ENCODE measurements at regions of chr14 and their contacts with region 1.

Region 1: DNA sequence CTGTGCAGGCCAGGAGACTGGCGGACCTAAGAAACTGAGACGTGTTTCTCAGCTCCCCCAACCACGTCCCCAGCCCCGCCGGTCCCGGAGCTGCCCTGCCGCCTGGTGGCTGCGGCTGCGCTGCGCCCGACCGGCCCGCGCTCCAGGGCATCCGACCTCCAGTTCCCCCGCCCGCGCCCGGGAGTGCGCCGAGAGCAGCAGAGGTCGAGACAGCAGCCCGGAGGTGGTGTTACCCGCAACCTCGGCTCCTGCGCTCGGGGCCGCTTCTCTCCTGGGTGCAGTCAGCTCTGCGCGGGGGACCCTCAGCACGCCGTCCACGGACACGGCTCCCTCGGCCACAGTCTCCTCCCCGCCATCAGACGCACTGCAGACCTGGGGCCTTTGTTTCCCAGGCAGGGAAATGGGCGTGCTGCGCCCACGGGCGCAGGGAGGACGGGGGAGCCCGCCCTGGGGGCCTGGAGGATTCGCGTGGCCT is 21.6 kb upstream of the GPR132 start:
- DNase-seq: peak; percentile 80
- H3K4me3 ChIP-seq: peak overlapping the region in 3 of 4 donors; percentile 22 to 54 (median 46)
- H3K27ac ChIP-seq: peak overlapping the region; percentile 27 to 81 (median 66)
- H3K4me1 ChIP-seq: peaks cover 16 to 50% (median 44%) of the 10 kb centered on the region in 4 donors
- H3K27me3 ChIP-seq: peaks cover 14% of the 10 kb centered on the region
- CTCF ChIP-seq: peak; percentile 69 to 89 (median 79)
- EP300 ChIP-seq: no peak
- POLR2A ChIP-seq: peak; percentile 41

Region 2: DNA sequence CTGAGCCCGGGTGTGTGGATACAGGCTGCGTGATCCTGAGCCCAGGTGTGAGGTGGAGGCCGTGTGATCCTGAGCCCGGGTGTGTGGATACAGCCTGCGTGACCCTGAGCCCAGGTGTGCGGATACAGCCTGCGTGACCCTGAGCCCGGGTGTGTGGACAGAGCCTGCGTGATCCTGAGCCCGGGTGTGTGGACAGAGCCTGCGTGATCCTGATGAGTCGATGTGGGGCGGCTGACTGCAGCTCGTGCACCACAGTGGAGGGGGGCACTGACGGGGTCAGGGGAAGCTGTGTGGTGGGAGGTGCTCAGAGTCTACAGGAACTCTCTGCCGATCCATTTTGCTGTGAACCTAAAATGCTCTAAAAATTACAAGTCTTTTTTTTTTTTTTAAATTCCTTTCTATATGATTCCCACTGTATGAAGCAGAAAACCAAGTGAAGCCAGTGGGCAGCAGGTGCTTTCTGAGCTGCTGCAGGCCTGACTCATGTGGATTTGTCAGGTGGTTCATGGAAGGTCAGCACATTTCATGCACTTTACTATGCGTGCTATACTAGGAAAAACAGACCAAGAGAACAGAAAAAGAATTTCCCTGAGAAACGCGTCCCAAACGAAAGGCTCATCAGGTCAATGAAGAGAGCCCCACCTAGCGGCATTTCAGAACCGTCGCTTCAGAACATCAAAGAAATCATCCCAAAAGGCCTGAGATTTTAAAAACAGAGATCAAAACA is 194.7 kb after region 1 on chr14:
- in situ Hi-C with region 1: loop called in 1 of 4 experiments (anchors 25 kb)
- intact Hi-C with region 1: no loop called
- DNase-seq: no peak
- H3K4me3 ChIP-seq: no peak overlapping the region
- H3K27ac ChIP-seq: no peak overlapping the region
- H3K4me1 ChIP-seq: peaks cover 0 to 16% (median 0%) of the 10 kb centered on the region in 4 donors
- H3K27me3 ChIP-seq: no peaks in the 10 kb centered on the region
- CTCF ChIP-seq: peak; percentile 43 to 61 (median 53)
- EP300 ChIP-seq: no peak
- POLR2A ChIP-seq: no peak

Region 3: DNA sequence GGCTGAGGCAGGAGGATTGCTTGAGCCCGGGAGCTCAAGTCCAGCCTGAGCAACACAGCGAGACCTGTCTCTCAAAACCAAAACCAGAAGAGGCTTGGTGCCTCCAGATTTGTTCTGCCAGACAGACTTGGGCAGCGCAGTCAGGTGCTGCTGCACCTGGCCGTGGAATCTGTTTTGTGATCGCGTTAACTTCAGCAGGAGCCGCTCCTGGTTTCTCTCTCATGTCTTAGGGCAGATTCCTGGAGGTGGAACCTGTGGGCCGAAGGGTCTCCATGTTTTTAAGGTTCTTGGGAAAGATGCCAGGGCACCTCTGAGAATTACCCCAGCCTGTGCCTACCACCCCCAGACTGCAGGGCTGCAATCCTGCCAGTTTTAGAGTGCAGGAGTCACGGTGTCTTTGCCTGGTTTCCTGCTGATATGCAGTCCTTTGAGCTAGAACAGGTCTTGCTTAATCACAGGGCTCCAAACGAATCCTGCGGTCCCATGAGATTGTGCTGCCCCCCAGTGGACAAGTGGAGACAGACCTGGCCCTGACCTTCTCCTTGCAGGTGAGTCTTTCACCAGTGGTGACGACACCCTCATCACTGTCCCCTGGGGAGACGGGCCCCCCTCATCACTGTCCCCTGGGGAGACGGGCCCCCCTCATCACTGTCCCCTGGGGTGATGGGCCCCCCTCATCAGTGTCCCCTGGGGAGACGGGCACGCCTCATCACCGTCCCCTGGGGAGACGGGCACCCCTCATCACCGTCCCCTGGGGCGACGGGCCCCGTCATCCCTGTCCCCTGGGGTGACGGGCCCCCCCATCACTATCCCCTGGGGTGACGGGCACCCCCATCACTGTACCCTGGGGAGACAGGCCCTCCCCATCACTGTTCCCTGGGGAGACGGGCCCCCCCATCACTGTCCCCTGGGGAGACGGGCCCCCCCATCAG is 265.3 kb after region 1 on chr14:
- in situ Hi-C with region 1: loop called in 1 of 4 experiments (anchors 10 kb)
- intact Hi-C with region 1: loop called (anchors 10 kb)
- DNase-seq: peak; percentile 90
- H3K4me3 ChIP-seq: no peak overlapping the region
- H3K27ac ChIP-seq: no peak overlapping the region
- H3K4me1 ChIP-seq: peaks cover 0 to 4% (median 0%) of the 10 kb centered on the region in 4 donors
- H3K27me3 ChIP-seq: no peaks in the 10 kb centered on the region
- CTCF ChIP-seq: peak; percentile 81 to 92 (median 85)
- EP300 ChIP-seq: no peak
- POLR2A ChIP-seq: no peak

Measured in transverse colon (tissue), 4 donors.